Activated CD4-positive, alpha-beta memory T cell treated with anti-CD3 and anti-CD28 coated beads for 36 hours (primary cell): ENCODE measurements at regions of chr1 and their contacts with region 1.

Region 1: DNA sequence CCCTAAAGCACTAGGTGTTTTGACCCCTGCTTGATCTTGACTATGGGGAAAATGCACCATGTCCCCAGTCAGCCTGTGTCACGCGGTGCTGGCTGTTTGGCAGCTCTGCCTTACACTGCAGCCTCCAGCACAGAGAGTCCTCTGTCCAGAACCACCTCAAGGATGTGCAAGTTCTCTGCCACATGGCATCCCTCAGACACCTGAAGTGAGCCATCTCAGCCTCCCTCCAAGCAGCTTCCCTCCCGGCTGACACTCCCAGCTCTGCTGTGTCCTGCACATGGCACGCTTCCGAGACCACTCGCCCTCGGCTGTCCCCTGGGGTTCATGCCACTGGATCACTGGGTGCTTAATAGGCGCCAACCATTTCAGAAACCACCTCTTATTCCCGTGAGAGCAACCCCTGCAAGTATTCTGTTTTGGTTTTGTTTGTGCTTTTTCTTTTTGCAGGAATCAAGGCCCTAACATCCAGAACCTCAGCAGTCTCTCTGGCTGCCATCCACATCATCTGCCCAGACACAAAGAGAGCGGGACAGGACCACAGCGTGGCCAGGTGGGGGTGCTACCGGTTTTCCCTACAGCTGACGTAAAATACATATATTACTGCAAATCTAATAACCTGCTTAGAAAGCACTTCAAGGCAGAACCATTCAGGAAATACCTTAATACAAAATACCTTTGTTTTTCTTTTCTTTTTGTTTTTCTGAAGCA is 45.7 kb downstream of the CAPZB start:
- DNase-seq: peak; percentile 46
- H3K4me3 Mint-ChIP-seq: no peak overlapping the region
- H3K27ac Mint-ChIP-seq: peak overlapping the region; percentile 42
- H3K4me1 Mint-ChIP-seq: peaks cover 88% of the 10 kb centered on the region
- H3K27me3 Mint-ChIP-seq: no peaks in the 10 kb centered on the region

Region 2: DNA sequence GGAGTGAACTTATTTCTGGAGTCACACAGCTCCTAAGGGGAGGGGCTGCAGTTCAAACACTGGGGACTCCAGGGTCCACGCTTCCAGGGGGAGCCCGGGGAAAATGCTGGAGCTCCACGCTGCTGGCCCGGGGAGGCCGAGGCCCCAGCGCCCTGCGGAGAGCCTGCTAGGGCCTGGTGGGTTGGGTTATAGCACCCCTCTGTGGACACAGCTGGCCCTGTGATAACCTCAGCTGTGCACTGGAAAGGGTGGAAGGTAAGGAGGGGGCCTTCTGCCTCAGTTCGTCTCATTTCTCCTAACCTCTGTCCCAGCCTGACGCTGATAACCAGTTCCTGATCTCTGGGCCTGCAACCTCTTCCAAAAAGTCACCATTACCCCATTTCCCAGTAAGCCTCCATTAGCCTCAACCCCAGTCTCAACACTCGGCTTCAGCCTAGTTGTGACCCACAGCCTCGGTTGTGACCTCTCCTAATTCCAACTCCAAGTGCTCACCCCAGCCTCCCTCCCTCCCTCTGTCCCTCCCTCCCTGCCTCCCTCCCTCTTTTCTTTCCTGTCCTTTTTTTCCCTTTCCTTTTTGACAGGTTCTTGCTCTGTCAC is 211.6 kb after region 1 on chr1:
- CTCF ChIA-PET with region 1: interaction called, 5 read pairs
- POLR2A ChIA-PET with region 1: no interaction called
- intact Hi-C with region 1: loop called (anchors 5 kb)
- DNase-seq: peak; percentile 71
- H3K4me3 Mint-ChIP-seq: no peak overlapping the region
- H3K27ac Mint-ChIP-seq: no peak overlapping the region
- H3K4me1 Mint-ChIP-seq: peaks cover 34% of the 10 kb centered on the region
- H3K27me3 Mint-ChIP-seq: no peaks in the 10 kb centered on the region